ENCODE measurements at regions of chr12 and their contacts with region 1.

Region 1: DNA sequence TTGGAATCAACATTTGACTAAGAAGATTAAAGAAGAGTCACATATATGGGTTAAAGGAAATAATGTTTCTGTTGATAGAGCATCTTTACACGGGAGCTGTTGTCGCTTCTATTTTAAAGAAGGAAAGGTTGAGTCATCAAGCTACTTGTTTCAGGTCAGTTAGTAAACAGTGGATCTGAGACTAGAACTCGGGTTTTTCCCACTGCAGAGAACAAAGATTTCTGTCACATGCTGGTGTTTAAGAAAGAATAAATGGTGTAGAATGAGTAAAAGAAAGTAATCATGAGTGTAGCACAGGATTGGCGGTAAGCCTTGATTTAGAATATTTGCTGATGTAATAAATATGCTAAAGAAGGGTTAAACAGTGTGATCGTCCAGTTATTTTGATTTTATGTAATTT is 455.5 kb downstream of the AEBP2 start:
- DNase-seq: no peak
- H3K4me3 Mint-ChIP-seq: no peak overlapping the region
- H3K27ac Mint-ChIP-seq: peak overlapping the region; percentile 87
- H3K4me1 Mint-ChIP-seq: peaks cover 7% of the 10 kb centered on the region
- H3K27me3 Mint-ChIP-seq: no peaks in the 10 kb centered on the region

Region 2: DNA sequence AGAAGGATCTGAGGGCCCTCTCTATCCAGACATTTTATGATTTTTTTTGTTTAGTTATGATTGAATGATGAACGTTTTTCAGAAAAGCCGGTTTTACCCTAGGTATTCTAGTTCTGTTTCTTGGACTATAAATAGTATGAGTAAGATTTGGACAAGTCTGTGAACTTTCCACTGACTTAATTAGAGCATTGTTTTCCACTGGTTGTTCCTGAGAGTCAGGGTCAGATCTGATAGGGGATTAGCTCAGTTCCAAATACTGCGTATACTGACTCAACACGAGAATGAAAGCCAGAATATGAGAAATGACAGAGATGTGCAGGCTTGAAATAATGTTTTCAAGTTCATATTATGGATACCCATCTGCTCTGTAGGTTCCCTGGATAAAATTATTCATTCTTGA is 93.9 kb before region 1 on chr12:
- intact Hi-C with region 1: loop called (anchors 1 kb)
- DNase-seq: no peak
- H3K4me3 Mint-ChIP-seq: no peak overlapping the region
- H3K27ac Mint-ChIP-seq: peak overlapping the region; percentile 68
- H3K4me1 Mint-ChIP-seq: peaks cover 2% of the 10 kb centered on the region
- H3K27me3 Mint-ChIP-seq: no peaks in the 10 kb centered on the region

Region 3: DNA sequence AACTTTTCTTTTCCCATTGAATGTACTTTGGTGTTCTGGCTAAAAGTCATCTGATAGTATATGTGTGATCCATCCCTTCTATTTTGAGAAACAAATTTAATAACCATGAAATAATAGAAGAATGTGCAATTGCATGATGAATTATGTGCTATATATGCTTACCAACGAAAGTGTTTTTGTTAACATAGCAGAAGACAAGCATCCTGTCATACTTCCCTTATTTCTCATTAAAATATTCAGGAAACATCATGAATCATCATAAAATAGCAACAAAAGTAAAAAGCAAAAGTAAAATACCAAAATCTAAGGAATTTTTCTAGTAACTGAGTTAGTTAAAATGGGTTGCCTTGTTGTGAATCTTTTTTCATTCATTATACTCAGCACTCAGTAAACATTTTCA is 64.5 kb after region 1 on chr12:
- intact Hi-C with region 1: no loop called
- DNase-seq: no peak
- H3K4me3 Mint-ChIP-seq: no peak overlapping the region
- H3K27ac Mint-ChIP-seq: no peak overlapping the region
- H3K4me1 Mint-ChIP-seq: no peaks in the 10 kb centered on the region
- H3K27me3 Mint-ChIP-seq: no peaks in the 10 kb centered on the region

Region 4: DNA sequence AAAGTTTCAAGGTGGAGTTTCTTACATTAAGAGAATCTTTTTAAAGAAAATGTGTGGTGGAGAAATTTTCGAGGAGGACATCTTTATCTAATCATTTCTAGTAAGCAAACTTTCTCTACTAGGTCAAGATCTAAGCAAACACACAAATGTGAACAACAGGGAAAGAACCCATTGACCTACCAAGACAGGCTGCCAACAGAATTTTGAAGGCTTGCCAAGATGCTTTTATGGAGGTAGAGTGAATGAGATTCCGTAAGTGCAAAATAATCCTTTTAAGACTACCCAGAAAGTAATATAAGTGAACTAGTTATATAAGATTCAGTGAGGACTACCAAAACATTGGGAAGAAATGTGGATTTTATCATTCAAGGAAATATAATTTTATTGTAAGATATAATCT is 116.4 kb after region 1 on chr12:
- intact Hi-C with region 1: no loop called
- DNase-seq: no peak
- H3K4me3 Mint-ChIP-seq: no peak overlapping the region
- H3K27ac Mint-ChIP-seq: no peak overlapping the region
- H3K4me1 Mint-ChIP-seq: no peaks in the 10 kb centered on the region
- H3K27me3 Mint-ChIP-seq: no peaks in the 10 kb centered on the region

Measured in activated CD4-positive, alpha-beta T cell treated with anti-CD3 and anti-CD28 coated beads, Interleukin-2, amount 10 ng/mL, durations not matched to agents 24 days and 14 days (primary cell).